A549 (cell line): ENCODE measurements at regions of chr7 and their contacts with region 1.

Region 1: GRCh38 chr7:39580149-39580874 is 14.1 kb downstream of the YAE1 start:
- DNase-seq: peak; percentile 80 to 94
- ATAC-seq: peak; percentile 97 to 98
- H3K4me3 ChIP-seq: no peak overlapping the region
- H3K27ac ChIP-seq: peak overlapping the region in 1 of 2 experiments; percentile 28; a peak in 1 of 6 replicates
- H3K4me1 ChIP-seq: no peaks in the 10 kb centered on the region
- CTCF ChIP-seq: peak; percentile 89
- EP300 ChIP-seq: no peak
- POLR2A ChIP-seq: no peak
- RAD21 ChIP-seq: peak; percentile 95

Region 2: DNA sequence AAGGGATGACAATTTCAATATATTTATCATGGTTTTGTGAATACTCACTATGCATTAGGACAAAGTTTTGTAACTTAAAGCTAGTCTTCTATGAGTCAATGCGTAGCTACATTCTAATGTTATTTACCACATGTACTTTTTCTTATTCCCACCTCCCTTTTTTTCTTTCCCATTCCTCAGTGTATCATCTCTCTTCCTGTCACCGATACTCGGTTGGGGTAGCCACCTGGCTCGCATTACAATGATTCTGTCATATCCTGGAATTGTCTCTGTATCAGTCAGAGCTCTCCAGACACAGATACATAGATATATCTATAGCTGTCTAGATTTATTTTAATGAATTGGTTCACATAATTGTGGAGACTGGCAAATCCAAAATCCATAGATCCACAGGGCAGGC is 33.3 kb after region 1 on chr7:
- CTCF ChIA-PET with region 1: interaction called, 12 read pairs
- POLR2A ChIA-PET with region 1: no interaction called
- DNase-seq: no peak
- ATAC-seq: no peak
- H3K4me3 ChIP-seq: no peak overlapping the region
- H3K27ac ChIP-seq: no peak overlapping the region
- H3K4me1 ChIP-seq: peaks cover 11% of the 10 kb centered on the region; the same call in 2 of the 3 replicates
- CTCF ChIP-seq: no peak
- EP300 ChIP-seq: no peak
- POLR2A ChIP-seq: no peak
- RAD21 ChIP-seq: no peak

Region 3: GRCh38 chr7:39720574-39720973 is 140.3 kb after region 1 on chr7:
- CTCF ChIA-PET with region 1: interaction called, 10 read pairs
- POLR2A ChIA-PET with region 1: no interaction called
- DNase-seq: no peak
- ATAC-seq: no peak
- H3K4me3 ChIP-seq: no peak overlapping the region
- H3K27ac ChIP-seq: no peak overlapping the region
- H3K4me1 ChIP-seq: no peaks in the 10 kb centered on the region
- CTCF ChIP-seq: no peak
- EP300 ChIP-seq: no peak
- POLR2A ChIP-seq: no peak
- RAD21 ChIP-seq: no peak

Region 4: GRCh38 chr7:39746103-39746819 is 165.9 kb after region 1 on chr7:
- CTCF ChIA-PET with region 1: interaction called, 371 read pairs
- POLR2A ChIA-PET with region 1: no interaction called
- DNase-seq: peak; percentile 74 to 87
- ATAC-seq: peak; percentile 85 to 92; a peak in 5 of 6 replicates
- H3K4me3 ChIP-seq: no peak overlapping the region
- H3K27ac ChIP-seq: no peak overlapping the region
- H3K4me1 ChIP-seq: peaks cover 10% of the 10 kb centered on the region
- CTCF ChIP-seq: peak; percentile 82
- EP300 ChIP-seq: no peak
- POLR2A ChIP-seq: no peak
- RAD21 ChIP-seq: peak; percentile 80 to 86